CD8-positive, alpha-beta T cell (primary cell): ENCODE measurements at regions of chr10 and their contacts with region 1.

Region 1: DNA sequence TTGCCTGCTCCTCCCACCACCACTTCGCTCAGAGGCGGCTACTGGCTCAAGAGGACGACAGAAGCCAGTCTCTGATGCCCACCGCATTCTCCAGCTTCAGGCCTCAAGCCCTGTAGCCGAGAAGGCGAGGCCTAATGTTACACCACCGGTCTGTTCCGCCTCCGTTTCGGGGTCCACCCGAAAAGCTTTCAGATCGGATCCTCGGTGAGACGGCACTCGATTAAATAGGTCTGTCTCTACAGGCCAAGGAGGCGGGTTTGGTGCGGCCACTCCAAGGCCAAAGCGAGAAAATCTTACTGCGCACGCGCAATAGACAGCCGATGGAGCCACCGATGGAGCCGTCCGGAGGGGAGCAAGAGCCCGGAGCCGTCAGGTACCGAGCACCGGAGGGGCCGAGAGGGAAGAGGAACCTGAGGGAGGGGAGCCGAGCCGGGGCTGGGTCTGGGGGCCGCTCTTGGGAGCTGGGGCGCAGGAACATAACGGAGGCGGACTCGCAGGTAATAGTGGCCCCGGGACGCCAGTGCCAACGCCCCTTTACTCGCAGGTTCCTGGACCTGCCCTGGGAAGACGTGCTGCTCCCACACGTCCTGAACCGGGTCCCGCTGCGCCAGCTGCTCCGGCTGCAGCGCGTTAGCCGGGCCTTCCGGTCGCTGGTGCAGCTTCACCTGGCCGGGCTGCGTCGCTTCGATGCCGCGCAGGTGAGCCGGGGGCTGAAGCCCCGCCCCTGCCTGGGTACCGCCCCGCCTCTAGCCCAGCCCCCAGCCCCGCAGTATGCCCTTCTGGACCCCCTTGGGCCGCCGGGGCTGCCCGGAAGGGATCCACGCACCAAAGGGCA is at the start of gene FBXL15:
- DNase-seq: peak; percentile 86 to 98 (median 95)
- ATAC-seq: peak; percentile 70
- H3K4me3 ChIP-seq: peak within 1 kb of the TSS; percentile 75 to 81
- H3K4me3 Mint-ChIP-seq: peak within 1 kb of the TSS; percentile 95
- H3K27ac ChIP-seq: peak within 1 kb of the TSS; percentile 79 to 82
- H3K27ac Mint-ChIP-seq: peak within 1 kb of the TSS; percentile 91
- H3K4me1 ChIP-seq: peaks cover 36% of the 10 kb centered on the region
- H3K4me1 Mint-ChIP-seq: peaks cover 39% of the 10 kb centered on the region
- H3K27me3 ChIP-seq: peaks cover 6 to 17% of the 10 kb centered on the region in 2 experiments
- H3K27me3 Mint-ChIP-seq: peaks cover 15% of the 10 kb centered on the region
- CTCF ChIP-seq: no peak
- total RNA-seq, gene FBXL15: 7.0 to 7.9 TPM

Region 2: GRCh38 chr10:101858723-101859500 is 562.1 kb before region 1 on chr10:
- CTCF ChIA-PET with region 1: no interaction called
- POLR2A ChIA-PET with region 1: no interaction called
- intact Hi-C with region 1: no loop called
- DNase-seq: no peak
- ATAC-seq: no peak
- H3K4me3 ChIP-seq: peak overlapping the region in 1 of 2 experiments; percentile 10
- H3K4me3 Mint-ChIP-seq: peak overlapping the region; percentile 38
- H3K27ac ChIP-seq: peak overlapping the region in 1 of 2 experiments; percentile 52
- H3K27ac Mint-ChIP-seq: no peak overlapping the region
- H3K4me1 ChIP-seq: no peaks in the 10 kb centered on the region
- H3K4me1 Mint-ChIP-seq: peaks cover 4% of the 10 kb centered on the region
- H3K27me3 ChIP-seq: no peaks in the 10 kb centered on the region
- H3K27me3 Mint-ChIP-seq: no peaks in the 10 kb centered on the region
- CTCF ChIP-seq: no peak

Region 3: GRCh38 chr10:101903827-101904550 is 517.0 kb before region 1 on chr10:
- CTCF ChIA-PET with region 1: no interaction called
- POLR2A ChIA-PET with region 1: no interaction called
- intact Hi-C with region 1: no loop called
- DNase-seq: peak in 1 of 9 experiments; percentile 20
- ATAC-seq: no peak
- H3K4me3 ChIP-seq: no peak overlapping the region
- H3K4me3 Mint-ChIP-seq: no peak overlapping the region
- H3K27ac ChIP-seq: no peak overlapping the region
- H3K27ac Mint-ChIP-seq: no peak overlapping the region
- H3K4me1 ChIP-seq: no peaks in the 10 kb centered on the region
- H3K4me1 Mint-ChIP-seq: peaks cover 9% of the 10 kb centered on the region
- H3K27me3 ChIP-seq: no peaks in the 10 kb centered on the region
- H3K27me3 Mint-ChIP-seq: no peaks in the 10 kb centered on the region
- CTCF ChIP-seq: no peak

Region 4: GRCh38 chr10:102055647-102056419 is 365.2 kb before region 1 on chr10 and contains the start of gene ARMH3:
- CTCF ChIA-PET with region 1: no interaction called
- POLR2A ChIA-PET with region 1: no interaction called
- intact Hi-C with region 1: loop called in 1 of 2 experiments (anchors 10 kb)
- DNase-seq: peak; percentile 75 to 95 (median 87)
- ATAC-seq: peak; percentile 93
- H3K4me3 ChIP-seq: peak within 1 kb of the TSS; percentile 93 to 94
- H3K4me3 Mint-ChIP-seq: peak within 1 kb of the TSS; percentile 97
- H3K27ac ChIP-seq: peak within 1 kb of the TSS; percentile 79 to 90
- H3K27ac Mint-ChIP-seq: peak within 1 kb of the TSS; percentile 95
- H3K4me1 ChIP-seq: peaks cover 40% of the 10 kb centered on the region
- H3K4me1 Mint-ChIP-seq: peaks cover 42% of the 10 kb centered on the region
- H3K27me3 ChIP-seq: no peaks in the 10 kb centered on the region
- H3K27me3 Mint-ChIP-seq: no peaks in the 10 kb centered on the region
- CTCF ChIP-seq: no peak
- total RNA-seq, gene ARMH3: 18.6 to 20.6 TPM

Region 5: DNA sequence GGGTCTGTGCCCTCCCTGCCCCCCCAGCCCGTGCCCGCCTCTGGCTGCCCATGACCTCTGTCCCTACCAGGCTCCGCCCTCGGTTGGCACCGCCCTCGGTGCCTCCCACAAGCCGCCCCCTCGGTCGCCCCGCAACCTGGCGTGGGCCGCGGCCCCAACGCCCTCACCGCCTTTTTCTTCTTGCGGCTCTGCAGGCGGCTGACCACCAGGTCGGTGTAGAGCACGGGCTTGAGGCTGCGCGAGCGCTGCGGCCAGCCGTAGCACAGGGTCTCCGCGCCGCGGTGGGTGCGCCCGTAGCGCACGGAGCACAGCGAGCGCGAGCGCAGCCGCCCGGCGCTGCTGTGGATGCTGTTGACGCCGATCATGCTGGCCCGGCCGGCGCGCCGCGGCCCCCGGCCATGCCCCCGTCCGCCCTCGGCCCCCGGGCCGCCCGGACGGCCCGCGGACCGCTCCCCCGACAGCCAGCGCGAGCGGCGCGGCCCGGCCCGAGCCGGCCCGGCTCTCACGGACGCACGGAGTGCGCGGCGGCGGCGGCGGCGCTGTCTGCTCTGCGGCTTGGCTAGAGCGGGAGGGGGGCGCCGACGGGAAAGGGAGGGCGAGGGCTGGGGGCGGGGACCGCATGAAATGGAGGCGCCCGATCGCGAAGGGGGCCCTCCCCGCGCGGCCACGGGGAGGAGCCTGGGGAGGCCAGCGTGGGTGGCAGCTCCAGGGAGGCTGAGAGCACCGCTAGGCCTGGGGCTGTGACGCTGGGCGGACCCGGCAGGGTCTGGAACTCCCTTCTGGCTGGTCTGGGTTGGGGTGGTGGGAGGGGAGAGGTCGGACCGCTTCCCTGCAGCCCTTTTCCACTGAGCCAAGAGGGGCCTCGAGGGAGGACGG is 12.1 kb before region 1 on chr10:
- CTCF ChIA-PET with region 1: interaction called, 14 read pairs
- POLR2A ChIA-PET with region 1: interaction called, 17 read pairs
- intact Hi-C with region 1: loop called in 1 of 2 experiments (anchors 1 kb)
- DNase-seq: peak; percentile 49 to 86 (median 79)
- ATAC-seq: peak; percentile 72
- H3K4me3 ChIP-seq: peak overlapping the region; percentile 39 to 68
- H3K4me3 Mint-ChIP-seq: peak overlapping the region; percentile 83
- H3K27ac ChIP-seq: peak overlapping the region; percentile 31 to 43
- H3K27ac Mint-ChIP-seq: peak overlapping the region; percentile 91
- H3K4me1 ChIP-seq: peaks cover 36% of the 10 kb centered on the region
- H3K4me1 Mint-ChIP-seq: peaks cover 37% of the 10 kb centered on the region
- H3K27me3 ChIP-seq: peaks cover 0 to 26% of the 10 kb centered on the region in 2 experiments
- H3K27me3 Mint-ChIP-seq: peaks cover 17% of the 10 kb centered on the region
- CTCF ChIP-seq: no peak

Region 6: GRCh38 chr10:102450194-102450938 is 29.3 kb after region 1 on chr10:
- CTCF ChIA-PET with region 1: interaction called, 27 read pairs
- POLR2A ChIA-PET with region 1: interaction called, 66 read pairs
- intact Hi-C with region 1: loop called (anchors 1 kb)
- DNase-seq: peak; percentile 78 to 98 (median 89)
- ATAC-seq: peak; percentile 77
- H3K4me3 ChIP-seq: peak overlapping the region; percentile 73 to 92
- H3K4me3 Mint-ChIP-seq: peak overlapping the region; percentile 92
- H3K27ac ChIP-seq: peak overlapping the region; percentile 76 to 88
- H3K27ac Mint-ChIP-seq: peak overlapping the region; percentile 94
- H3K4me1 ChIP-seq: peaks cover 16% of the 10 kb centered on the region
- H3K4me1 Mint-ChIP-seq: peaks cover 23% of the 10 kb centered on the region
- H3K27me3 ChIP-seq: no peaks in the 10 kb centered on the region
- H3K27me3 Mint-ChIP-seq: no peaks in the 10 kb centered on the region
- CTCF ChIP-seq: no peak

Region 7: GRCh38 chr10:102555781-102556328 is 134.8 kb after region 1 on chr10:
- CTCF ChIA-PET with region 1: no interaction called
- POLR2A ChIA-PET with region 1: no interaction called
- intact Hi-C with region 1: no loop called
- DNase-seq: no peak
- ATAC-seq: no peak
- H3K4me3 ChIP-seq: no peak overlapping the region
- H3K4me3 Mint-ChIP-seq: no peak overlapping the region
- H3K27ac ChIP-seq: no peak overlapping the region
- H3K27ac Mint-ChIP-seq: no peak overlapping the region
- H3K4me1 ChIP-seq: no peaks in the 10 kb centered on the region
- H3K4me1 Mint-ChIP-seq: no peaks in the 10 kb centered on the region
- H3K27me3 ChIP-seq: no peaks in the 10 kb centered on the region
- H3K27me3 Mint-ChIP-seq: no peaks in the 10 kb centered on the region
- CTCF ChIP-seq: no peak

Region 8: DNA sequence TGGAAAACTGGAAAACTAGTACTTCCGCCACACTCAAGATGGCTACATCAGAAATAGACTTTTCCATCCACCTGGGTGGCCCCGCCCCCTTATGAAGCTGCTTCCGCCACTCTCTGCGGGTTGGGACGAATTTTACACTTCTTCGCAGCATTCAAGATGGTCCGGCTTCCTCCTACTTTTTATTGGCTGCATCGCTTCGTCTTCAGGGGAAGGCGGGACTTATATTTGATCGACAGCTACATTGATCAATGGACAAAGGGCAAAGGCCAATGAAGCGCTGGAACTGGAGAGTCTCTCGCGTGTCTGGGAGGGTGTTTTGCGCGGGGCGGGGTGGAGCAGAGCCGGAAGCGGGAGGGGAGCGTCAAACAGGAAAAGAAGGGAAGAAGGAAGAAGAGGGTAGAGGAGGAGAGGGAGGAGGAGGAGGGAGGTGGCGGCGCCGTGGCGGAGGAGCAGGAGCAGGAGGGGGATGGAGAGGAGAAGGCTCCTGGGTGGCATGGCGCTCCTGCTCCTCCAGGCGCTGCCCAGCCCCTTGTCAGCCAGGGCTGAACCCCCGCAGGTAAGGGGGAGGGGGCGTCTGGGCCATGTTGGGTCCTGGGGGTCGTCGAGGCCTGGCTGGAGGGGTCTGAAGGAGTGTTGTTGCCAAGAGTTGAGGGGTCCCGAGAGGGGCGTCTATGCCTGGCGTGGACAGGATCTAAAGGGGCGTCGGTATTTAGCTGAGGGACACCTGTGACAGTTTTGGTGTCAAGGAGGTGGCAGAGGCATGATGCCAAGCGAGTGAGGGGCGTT is 322.8 kb after region 1 on chr10 and contains the start of gene WBP1L:
- CTCF ChIA-PET with region 1: no interaction called
- POLR2A ChIA-PET with region 1: no interaction called
- intact Hi-C with region 1: loop called in 1 of 2 experiments (anchors 1 kb)
- DNase-seq: peak; percentile 90 to 99 (median 95)
- ATAC-seq: peak; percentile 96
- H3K4me3 ChIP-seq: peak within 1 kb of the TSS; percentile 87 to 99
- H3K4me3 Mint-ChIP-seq: peak within 1 kb of the TSS; percentile 92
- H3K27ac ChIP-seq: peak within 1 kb of the TSS; percentile 64 to 91
- H3K27ac Mint-ChIP-seq: peak within 1 kb of the TSS; percentile 90
- H3K4me1 ChIP-seq: peaks cover 34% of the 10 kb centered on the region
- H3K4me1 Mint-ChIP-seq: peaks cover 50% of the 10 kb centered on the region
- H3K27me3 ChIP-seq: no peaks in the 10 kb centered on the region
- H3K27me3 Mint-ChIP-seq: no peaks in the 10 kb centered on the region
- CTCF ChIP-seq: no peak
- total RNA-seq, gene WBP1L: 5.5 to 5.9 TPM